ENCODE measurements at regions of chr3 and their contacts with region 1.

Region 1: DNA sequence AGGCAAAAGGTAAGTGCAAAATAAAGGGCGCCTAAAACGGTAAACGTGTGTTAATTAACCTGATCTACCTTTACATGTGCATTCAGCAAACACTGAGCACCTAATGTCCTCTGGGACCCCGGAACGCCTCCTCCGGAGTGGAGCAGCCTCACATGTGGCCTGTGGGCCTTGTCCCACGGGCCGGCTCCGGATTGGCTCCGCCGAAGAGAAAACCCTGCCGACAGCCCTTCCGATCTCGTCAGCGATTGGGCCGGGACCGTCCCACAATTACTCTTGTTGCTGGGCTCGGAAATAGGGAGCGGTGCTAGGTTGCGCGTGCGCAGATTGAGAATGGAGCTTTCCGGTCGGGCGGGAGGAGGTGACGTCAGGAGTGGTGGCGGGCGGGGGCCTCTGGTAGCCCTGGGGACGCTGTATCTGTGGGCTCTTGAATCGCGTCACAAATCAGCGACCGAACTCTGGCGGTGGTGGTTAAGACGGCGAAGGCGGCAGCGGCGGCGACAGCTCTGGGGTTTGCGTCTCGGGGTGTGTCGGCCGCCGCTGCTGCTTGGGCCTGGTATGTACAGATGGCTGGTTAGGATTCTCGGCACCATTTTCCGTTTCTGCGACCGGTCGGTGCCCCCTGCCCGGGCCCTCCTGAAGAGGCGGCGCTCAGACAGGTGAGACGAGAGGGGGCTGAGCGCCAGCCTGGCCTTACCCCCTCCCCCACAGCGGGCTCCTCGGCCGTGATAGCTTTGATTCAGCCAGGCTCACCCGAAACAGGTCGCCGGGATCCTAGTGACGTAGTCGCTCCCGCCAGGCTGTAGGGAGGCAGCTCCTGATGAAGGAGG is at the start of gene SENP2:
- DNase-seq: peak; percentile 99
- ATAC-seq: peak; percentile 98
- H3K4me3 ChIP-seq: peak within 1 kb of the TSS; percentile 90
- H3K27ac ChIP-seq: peak within 1 kb of the TSS; percentile 36
- H3K4me1 ChIP-seq: peaks cover 12% of the 10 kb centered on the region
- H3K27me3 ChIP-seq: no peaks in the 10 kb centered on the region
- CTCF ChIP-seq: no peak
- total RNA-seq, gene SENP2: 44.3 and 46.4 TPM in 2 replicates

Region 2: DNA sequence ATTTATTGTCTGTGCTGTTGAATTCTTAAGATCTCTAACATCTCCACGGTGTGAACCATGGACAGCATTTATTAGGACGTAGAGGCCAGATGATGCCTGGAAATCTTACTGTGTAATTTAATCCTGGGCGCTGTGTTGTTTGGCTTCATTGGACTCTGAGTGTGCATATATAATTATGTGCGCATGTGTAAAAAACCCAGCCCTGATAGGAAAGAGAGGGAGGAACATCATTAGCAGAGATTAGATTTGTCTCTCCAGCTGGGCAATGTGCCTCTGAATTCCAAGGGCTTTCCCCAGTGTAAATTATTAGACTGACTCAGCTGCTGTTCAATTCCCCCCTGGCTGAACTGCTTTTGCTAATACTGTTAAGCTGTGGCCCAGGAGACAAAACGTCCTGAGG is 183.5 kb before region 1 on chr3:
- CTCF ChIA-PET with region 1: no interaction called
- POLR2A ChIA-PET with region 1: no interaction called
- intact Hi-C with region 1: no loop called
- DNase-seq: no peak
- ATAC-seq: no peak
- H3K4me3 ChIP-seq: no peak overlapping the region
- H3K27ac ChIP-seq: no peak overlapping the region
- H3K4me1 ChIP-seq: no peaks in the 10 kb centered on the region; the same call in 1 of the 2 replicates
- H3K27me3 ChIP-seq: no peaks in the 10 kb centered on the region
- CTCF ChIP-seq: no peak

Region 3: GRCh38 chr3:185630182-185630622 is 44.1 kb after region 1 on chr3:
- CTCF ChIA-PET with region 1: no interaction called
- POLR2A ChIA-PET with region 1: no interaction called
- intact Hi-C with region 1: loop called (anchors 5 kb)
- DNase-seq: peak; percentile 45
- ATAC-seq: peak; percentile 88
- H3K4me3 ChIP-seq: no peak overlapping the region
- H3K27ac ChIP-seq: peak overlapping the region; percentile 43
- H3K4me1 ChIP-seq: peaks cover 13% of the 10 kb centered on the region
- H3K27me3 ChIP-seq: no peaks in the 10 kb centered on the region
- CTCF ChIP-seq: no peak

Region 4: DNA sequence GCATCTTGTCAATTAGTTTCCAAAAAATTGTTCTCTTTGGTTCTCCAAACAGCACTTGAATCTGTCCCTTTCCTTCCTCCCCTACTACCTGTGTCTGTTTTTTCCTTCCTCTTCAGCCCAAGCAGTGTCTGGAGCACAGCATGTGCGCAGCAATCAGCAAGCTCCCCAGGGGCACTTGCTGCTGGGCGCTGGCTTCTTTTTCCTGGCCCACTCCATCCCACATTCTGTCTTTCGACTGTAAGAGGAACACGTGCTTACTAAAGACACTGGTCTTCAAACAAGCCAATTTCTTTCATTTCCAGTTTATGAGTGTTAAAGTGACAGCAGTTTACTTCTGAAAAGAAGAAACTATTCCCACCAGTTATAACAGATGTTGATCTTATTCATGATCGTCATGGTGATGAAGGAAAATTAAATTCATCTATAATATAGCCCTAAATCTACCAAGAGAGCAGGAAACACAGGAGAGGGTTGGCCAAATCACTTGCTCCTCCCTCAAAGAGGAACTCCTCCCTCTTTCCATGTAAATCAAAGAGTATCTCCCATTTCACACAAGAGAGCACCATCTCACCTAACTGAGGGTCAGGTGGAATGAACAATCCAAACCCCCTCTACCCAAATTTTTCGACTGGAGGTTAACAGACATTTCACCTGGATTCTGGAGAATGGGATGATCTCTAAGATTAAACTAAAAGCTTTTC is 123.3 kb after region 1 on chr3:
- CTCF ChIA-PET with region 1: no interaction called
- POLR2A ChIA-PET with region 1: interaction called, 15 read pairs
- intact Hi-C with region 1: no loop called
- DNase-seq: no peak
- ATAC-seq: no peak
- H3K4me3 ChIP-seq: no peak overlapping the region
- H3K27ac ChIP-seq: no peak overlapping the region
- H3K4me1 ChIP-seq: peaks cover 15% of the 10 kb centered on the region; the same call in 1 of the 2 replicates
- H3K27me3 ChIP-seq: no peaks in the 10 kb centered on the region
- CTCF ChIP-seq: no peak

Region 5: GRCh38 chr3:185760550-185760949 is 174.5 kb after region 1 on chr3:
- CTCF ChIA-PET with region 1: no interaction called
- POLR2A ChIA-PET with region 1: no interaction called
- intact Hi-C with region 1: no loop called
- DNase-seq: no peak
- ATAC-seq: peak; percentile 14
- H3K4me3 ChIP-seq: no peak overlapping the region
- H3K27ac ChIP-seq: peak overlapping the region; percentile 13; the same call in 1 of the 2 replicates
- H3K4me1 ChIP-seq: peaks cover 49% of the 10 kb centered on the region
- H3K27me3 ChIP-seq: no peaks in the 10 kb centered on the region
- CTCF ChIP-seq: no peak